Ascending aorta (tissue), 2 donors: ENCODE measurements at regions of chr1 and their contacts with region 1.

Region 1: GRCh38 chr1:30085811-30086770 is 637.3 kb downstream of the MATN1 start:
- DNase-seq: peak in 1 of 2 donors; percentile 86
- H3K4me3 ChIP-seq: peak overlapping the region; percentile 28 to 61
- H3K27ac ChIP-seq: peak overlapping the region; percentile 96 to 98
- H3K4me1 ChIP-seq: peaks cover 10 to 28% of the 10 kb centered on the region in 2 donors
- H3K27me3 ChIP-seq: no peaks in the 10 kb centered on the region
- CTCF ChIP-seq: peak; percentile 83 to 99 (median 96)

Region 2: DNA sequence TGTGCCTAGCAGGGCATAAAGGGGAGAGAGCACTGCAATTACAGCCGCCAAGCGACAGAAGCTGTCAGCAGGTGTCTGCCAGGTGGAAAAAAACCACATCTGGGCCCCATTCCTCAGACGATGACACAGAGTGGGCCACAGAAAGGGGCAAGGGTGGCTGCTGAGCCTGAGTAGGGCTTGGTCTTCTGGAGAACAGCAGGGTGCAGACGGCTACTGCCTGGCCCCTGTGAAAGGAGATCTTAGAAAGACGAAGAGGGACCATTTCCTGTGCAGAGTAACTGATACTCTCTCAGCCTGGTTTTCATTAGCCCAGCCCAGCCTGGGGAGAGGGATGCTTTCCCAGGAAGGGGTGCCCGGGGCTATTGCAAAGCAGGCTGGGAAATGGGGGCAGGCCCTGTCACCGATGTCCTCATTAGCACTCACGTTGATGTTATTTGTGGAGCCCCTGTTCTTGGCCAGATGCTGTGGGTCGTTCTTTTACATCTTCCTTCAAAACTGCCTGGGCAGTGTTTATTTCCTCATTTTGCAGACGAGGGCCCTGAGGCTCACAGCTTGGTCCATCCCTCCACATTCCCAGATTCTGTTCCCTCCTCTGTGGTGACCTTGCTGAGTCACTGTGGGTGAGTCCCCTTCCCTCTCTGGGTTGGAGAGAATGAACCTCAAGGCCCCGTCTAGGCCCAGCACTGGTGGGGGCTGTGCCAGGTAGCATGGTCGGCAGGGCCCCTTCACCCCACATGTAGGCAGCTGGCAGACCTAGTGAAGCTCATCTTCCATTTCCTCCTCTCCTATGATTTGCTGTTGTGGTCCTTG is 377.0 kb before region 1 on chr1:
- intact Hi-C with region 1: loop called (anchors 1 kb)
- DNase-seq: no peak
- H3K4me3 ChIP-seq: no peak overlapping the region
- H3K27ac ChIP-seq: peak overlapping the region; percentile 87
- H3K4me1 ChIP-seq: peaks cover 22 to 33% of the 10 kb centered on the region in 2 donors
- H3K27me3 ChIP-seq: no peaks in the 10 kb centered on the region
- CTCF ChIP-seq: no peak

Region 3: DNA sequence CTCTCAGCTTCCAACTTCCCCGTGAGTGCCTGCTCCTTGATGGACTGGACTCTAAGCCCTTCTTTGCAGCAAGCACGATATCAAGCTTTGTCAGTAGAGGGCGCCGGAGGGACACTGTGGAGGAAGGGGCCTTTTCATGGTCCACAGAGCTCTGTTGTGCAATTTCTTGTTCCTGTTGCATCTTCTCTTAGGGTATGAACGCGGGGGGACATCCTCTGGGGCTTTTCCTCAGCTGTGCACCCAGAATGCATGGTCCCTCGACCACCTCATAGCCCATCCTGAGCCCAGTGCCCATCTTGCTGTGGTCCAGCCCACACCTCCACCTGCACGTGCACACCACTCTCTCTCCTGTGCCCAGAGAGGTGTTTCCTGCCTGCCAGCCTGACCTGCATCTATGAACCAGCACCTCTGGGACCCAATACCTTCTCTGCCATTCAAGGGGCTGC is 293.0 kb before region 1 on chr1:
- intact Hi-C with region 1: loop called (anchors 1 kb)
- DNase-seq: peak; percentile 41 to 90
- H3K4me3 ChIP-seq: no peak overlapping the region
- H3K27ac ChIP-seq: no peak overlapping the region
- H3K4me1 ChIP-seq: no peaks in the 10 kb centered on the region
- H3K27me3 ChIP-seq: no peaks in the 10 kb centered on the region
- CTCF ChIP-seq: peak; percentile 50 to 71 (median 52)

Region 4: DNA sequence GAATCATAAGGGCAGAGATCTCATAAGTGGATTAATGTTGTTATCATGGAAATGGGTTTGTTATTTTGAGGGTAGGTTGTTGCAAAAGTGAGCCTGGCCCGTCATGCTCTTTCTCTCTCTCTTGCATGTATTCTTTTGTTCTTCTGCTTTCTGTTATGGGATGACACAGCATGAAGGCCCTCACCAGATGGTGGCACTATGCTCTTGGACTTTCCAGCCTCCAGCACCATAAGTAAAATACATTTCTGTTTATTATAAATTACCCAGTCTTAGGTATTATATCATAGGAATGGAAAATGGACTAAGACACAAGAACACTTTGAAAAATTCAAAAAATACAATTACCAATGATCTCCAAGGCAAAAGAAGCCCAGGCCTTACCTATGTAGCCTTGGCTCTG is 173.7 kb before region 1 on chr1:
- intact Hi-C with region 1: loop called (anchors 2 kb)
- DNase-seq: no peak
- H3K4me3 ChIP-seq: no peak overlapping the region
- H3K27ac ChIP-seq: no peak overlapping the region
- H3K4me1 ChIP-seq: no peaks in the 10 kb centered on the region
- H3K27me3 ChIP-seq: no peaks in the 10 kb centered on the region
- CTCF ChIP-seq: no peak

Region 5: DNA sequence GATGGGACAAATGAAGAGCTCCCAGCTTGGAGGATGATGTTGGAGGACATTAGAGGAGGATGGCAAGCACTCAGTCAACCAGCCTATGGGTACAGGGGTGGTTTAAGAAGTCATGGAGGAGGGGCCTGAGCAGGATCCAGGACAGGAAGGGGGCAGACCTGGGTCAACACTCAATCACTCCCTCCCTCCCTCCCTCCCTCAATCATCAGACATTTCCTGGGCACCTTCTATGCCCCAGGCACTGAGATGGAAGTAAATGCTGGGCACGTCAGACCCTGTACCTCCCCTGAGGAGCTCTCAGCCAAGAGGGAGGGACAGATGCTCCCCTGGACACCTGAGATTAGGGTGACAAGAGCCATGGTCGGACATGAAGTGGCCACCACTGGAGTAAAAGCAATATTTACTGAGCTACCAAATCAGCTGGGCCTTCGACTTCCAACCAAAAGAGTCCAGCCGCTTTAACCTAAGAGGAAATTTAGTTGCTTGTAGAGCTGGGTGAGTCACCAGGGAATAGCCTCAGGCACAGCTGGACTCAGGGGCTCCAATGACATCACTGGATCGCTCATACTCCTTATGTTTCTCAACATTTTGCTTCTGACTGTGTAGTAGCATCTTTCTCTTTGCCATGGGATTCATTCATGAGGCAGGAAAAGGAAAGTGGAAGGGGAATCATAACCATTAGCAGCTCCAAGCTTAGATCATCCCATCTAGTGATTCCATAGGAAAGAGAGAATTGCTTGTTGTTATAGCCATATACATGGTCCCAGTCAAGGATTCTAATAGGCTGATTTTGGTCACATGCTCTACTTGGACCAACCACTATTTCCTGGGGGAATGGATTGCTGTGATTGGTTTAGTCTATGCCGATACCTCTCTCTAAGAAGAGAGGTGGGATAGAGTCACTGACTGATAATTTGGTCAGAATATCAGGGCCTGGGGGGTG is 27.2 kb before region 1 on chr1:
- intact Hi-C with region 1: loop called (anchors 2 kb)
- DNase-seq: no peak
- H3K4me3 ChIP-seq: no peak overlapping the region
- H3K27ac ChIP-seq: no peak overlapping the region
- H3K4me1 ChIP-seq: no peaks in the 10 kb centered on the region
- H3K27me3 ChIP-seq: no peaks in the 10 kb centered on the region
- CTCF ChIP-seq: no peak

Region 6: DNA sequence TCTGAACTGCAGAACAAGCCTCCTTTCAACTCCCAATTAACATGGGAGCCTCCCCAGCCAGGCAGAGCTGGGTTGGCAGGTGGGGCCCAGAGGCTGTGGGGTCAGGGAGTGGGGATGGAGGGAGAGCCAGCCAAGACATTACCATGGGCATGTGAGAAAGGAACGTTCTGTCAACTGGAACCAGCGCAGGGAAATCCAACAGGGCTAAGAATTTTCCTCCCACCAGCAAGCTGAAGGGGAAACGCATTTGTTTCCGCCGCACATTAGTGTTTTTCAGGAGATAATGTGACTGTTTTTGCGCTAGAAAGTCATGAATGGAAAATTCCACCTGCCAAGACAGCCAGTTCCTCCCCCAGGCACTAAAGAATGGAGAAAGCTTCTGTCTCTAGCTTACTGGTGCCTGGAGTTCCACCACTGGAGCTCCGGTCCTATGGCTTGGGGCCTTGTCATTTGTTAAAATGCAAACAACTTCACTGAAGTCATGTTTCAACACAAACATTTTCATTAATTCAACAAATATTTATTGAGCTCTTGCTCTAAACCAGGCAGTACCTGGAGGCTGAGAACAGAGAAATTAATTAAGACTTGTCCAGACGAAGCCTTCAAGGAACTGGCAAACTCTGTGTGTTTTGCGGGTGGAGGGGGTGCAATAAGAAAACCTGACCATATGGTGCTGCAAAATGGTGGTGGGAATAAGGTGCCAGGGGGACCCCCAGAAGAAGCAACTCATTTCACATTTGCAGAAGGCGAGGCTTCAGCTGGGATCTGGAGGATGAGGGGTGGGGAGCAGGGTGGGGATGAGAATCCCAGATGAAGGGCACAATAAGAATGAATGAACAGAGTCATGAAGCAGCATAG is 332.2 kb after region 1 on chr1:
- intact Hi-C with region 1: no loop called
- DNase-seq: peak in 1 of 2 donors; percentile 35
- H3K4me3 ChIP-seq: no peak overlapping the region
- H3K27ac ChIP-seq: no peak overlapping the region
- H3K4me1 ChIP-seq: no peaks in the 10 kb centered on the region
- H3K27me3 ChIP-seq: no peaks in the 10 kb centered on the region
- CTCF ChIP-seq: no peak